Right cardiac atrium (tissue), 5 donors: ENCODE measurements at regions of chr7 and their contacts with region 1.

Region 1: GRCh38 chr7:115475761-115476385 is 554.0 kb downstream of the MDFIC start:
- DNase-seq: peak in 1 of 3 donors; percentile 45
- ATAC-seq: peak in 1 of 2 donors; percentile 61
- H3K4me3 ChIP-seq: no peak overlapping the region
- H3K27ac ChIP-seq: no peak overlapping the region
- H3K4me1 ChIP-seq: no peaks in the 10 kb centered on the region
- H3K27me3 ChIP-seq: no peaks in the 10 kb centered on the region

Region 2: DNA sequence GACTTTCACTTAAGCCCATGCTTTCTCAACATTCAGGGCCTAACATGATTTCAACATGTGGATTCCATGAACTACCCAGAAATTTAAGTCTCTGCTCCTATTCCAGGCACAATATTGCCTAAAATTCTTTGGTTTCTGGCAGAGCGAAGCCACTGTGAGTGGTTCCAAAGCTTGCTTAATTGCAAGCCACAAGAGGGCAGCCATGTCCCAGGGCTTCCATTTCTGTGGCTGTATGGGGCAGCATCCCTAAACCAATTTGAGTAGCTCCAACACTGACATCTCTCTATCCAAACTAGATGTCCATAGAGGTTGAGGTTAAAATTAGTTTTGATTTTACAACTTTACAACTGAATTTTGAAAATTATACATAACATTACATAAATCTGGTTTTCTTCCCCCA is 610.3 kb before region 1 on chr7:
- intact Hi-C with region 1: loop called in 1 of 4 experiments (anchors 10 kb)
- DNase-seq: peak; percentile 58 to 81 (median 62)
- ATAC-seq: peak; percentile 89 to 90
- H3K4me3 ChIP-seq: no peak overlapping the region
- H3K27ac ChIP-seq: no peak overlapping the region
- H3K4me1 ChIP-seq: no peaks in the 10 kb centered on the region
- H3K27me3 ChIP-seq: no peaks in the 10 kb centered on the region

Region 3: GRCh38 chr7:115838829-115839228 is 363.0 kb after region 1 on chr7:
- intact Hi-C with region 1: no loop called
- DNase-seq: no peak
- ATAC-seq: no peak
- H3K4me3 ChIP-seq: no peak overlapping the region
- H3K27ac ChIP-seq: no peak overlapping the region
- H3K4me1 ChIP-seq: no peaks in the 10 kb centered on the region
- H3K27me3 ChIP-seq: no peaks in the 10 kb centered on the region